ENCODE measurements at regions of chr7 and their contacts with region 1.

Region 1: DNA sequence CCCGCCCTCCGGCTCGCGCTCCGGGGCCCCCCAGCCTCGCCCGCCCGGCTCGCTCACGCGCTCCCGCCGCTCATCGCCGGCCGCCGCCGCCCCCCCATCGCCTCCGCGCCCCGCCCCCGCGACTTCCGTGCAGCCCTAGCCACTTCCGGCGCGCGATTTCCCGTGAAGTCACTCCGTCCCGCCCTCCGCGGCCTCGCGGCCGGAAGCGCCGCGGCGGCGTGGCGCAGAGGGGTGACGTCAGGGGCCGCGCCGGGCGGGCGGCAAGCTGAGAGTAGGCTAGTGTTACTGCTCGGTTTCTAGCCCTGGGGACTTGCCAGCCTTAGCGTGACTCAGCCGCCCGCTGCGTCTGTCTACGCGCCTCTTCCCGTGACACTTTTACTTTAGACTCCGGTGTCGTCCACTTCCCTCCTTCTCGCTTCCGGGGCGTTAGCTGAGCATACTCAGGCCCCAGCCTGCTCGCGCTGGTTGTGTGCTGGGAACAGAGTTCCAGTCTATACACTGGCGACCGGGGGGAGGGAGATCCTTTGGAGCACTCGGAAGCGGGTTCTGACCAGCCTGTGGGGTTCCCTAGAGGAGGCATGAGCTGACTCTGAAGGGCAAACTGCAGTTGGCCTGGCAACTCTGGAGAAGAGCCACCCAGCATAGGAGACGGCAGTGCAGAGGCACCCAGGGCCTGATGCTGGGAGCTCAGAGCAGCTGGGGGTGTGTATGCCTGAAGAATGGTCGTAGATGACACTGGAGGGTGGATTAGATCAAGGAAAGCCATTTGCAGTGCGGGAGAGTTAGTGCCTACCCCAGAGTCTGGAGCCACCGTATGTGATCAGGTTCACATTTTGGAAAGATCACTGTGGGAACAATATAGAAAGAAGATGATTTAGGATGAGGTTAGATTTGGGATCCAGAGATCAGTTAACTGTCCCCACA is at the start of gene PURB:
- DNase-seq: peak; percentile 90 to 99 (median 93)

Region 2: DNA sequence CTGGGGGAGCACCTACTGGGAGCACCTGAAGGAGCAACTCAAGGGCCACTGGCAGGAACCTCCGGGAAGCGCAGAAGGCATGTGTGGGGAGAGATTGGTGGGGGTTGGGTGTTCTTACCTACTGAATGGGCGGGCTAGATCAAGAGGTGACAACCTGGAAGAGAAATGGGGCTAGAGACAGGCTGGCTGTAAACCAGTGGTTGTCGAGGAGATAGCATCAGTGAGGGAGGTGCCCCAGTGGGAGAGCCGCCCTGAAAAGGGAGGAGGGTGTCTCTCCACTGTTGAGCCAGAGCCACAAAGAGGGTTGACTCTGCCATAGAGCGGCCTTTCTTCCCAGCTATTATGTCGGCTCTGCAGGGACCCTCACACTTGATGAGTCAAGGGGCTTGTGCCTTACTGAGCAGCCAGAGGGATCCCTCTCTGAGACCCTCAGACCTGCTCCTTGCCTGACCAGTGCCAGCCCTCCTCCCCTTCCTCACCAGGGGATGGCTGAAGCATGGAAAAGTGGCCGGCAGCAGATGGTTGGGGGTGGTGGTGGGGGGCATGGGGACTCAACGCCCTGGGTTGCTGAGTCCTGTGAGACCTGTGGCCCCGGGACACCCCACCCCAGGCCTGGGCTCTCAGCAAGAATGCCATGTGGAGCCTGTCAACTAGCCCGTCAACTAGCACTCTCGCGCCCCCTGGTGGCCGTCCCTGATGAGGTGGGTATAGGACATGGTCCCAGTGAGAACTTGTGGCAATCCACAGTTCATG is 36.1 kb after region 1 on chr7:
- intact Hi-C with region 1: loop called (anchors 5 kb)
- DNase-seq: peak; percentile 77 to 98 (median 94)

Region 3: GRCh38 chr7:45073786-45074527 is 188.3 kb after region 1 on chr7:
- intact Hi-C with region 1: loop called (anchors 10 kb)
- DNase-seq: peak in 8 of 10 donors; percentile 43 to 94 (median 60)

Region 4: GRCh38 chr7:45111298-45112223 is 225.9 kb after region 1 on chr7 and contains the start of gene TBRG4:
- intact Hi-C with region 1: loop called (anchors 5 kb)
- DNase-seq: peak; percentile 89 to 99 (median 92)

Measured in posterior cingulate gyrus (tissue), 11 donors.